ENCODE measurements at regions of chr2 and their contacts with region 1.

Region 1: DNA sequence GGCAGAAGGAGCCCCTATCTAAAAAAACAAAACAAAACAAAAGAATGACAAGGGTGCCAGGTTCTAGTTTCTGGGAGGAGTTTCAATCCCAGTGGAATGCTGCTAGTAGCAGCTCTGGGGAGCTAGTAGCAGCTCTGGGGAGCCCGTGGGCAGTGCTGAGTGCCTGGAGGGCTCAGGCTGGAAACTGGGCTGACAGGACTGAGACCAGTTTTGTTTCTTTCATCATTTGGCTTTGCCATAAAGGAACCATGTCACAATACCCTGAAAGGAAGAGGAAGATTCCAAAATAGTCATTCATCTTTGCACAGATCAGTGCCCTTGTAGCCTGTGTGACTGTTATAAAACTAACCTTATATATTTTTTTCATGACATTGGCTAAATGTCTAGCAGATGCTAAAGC is 10.6 kb downstream of the MFSD6 start:
- DNase-seq: no peak
- H3K4me3 Mint-ChIP-seq: no peak overlapping the region
- H3K27ac Mint-ChIP-seq: no peak overlapping the region
- H3K4me1 Mint-ChIP-seq: peaks cover 51% of the 10 kb centered on the region
- H3K27me3 Mint-ChIP-seq: no peaks in the 10 kb centered on the region

Region 2: GRCh38 chr2:190301032-190301431 is 117.7 kb before region 1 on chr2:
- CTCF ChIA-PET with region 1: no interaction called
- POLR2A ChIA-PET with region 1: no interaction called
- intact Hi-C with region 1: no loop called
- DNase-seq: no peak
- H3K4me3 Mint-ChIP-seq: no peak overlapping the region
- H3K27ac Mint-ChIP-seq: no peak overlapping the region
- H3K4me1 Mint-ChIP-seq: peaks cover 17% of the 10 kb centered on the region
- H3K27me3 Mint-ChIP-seq: no peaks in the 10 kb centered on the region

Region 3: DNA sequence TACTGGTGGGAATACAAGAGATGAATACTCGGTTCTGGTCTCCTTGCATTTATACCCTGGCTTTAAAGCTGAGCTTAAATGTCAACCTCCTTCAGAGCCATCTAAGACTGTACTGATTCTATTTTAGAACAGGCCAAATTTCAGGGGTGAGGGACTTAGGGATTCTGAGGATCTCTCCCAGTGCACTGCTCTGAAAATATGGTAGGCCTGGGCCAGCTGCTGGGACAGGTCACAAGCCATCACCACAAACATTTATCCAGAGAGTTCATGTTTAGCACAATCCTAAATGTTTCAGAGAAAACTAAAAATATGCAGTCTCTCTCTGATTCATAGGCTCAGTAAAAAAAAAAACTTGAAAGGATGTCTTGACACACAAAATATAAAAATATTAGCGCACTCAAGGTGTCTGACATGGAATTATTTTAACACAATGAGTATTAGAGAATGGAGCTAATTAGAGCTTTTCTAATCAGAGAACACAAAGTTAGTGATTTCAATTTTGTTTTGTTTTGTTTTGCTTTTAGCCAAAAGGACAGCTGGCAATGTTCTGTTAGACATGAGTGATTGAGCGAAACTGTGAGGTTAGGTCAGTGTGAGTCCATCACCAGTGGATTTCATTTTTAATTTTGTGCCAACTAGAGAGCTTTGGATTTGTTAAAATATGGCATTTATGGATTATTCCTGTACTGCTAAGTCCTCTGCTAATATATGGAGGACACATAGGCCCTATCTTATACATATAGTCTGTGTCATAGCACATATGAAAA is 28.2 kb after region 1 on chr2:
- CTCF ChIA-PET with region 1: no interaction called
- POLR2A ChIA-PET with region 1: no interaction called
- intact Hi-C with region 1: loop called (anchors 2 kb)
- DNase-seq: no peak
- H3K4me3 Mint-ChIP-seq: no peak overlapping the region
- H3K27ac Mint-ChIP-seq: no peak overlapping the region
- H3K4me1 Mint-ChIP-seq: peaks cover 49% of the 10 kb centered on the region
- H3K27me3 Mint-ChIP-seq: no peaks in the 10 kb centered on the region